ENCODE measurements at regions of chr9 and their contacts with region 1.

Region 1: DNA sequence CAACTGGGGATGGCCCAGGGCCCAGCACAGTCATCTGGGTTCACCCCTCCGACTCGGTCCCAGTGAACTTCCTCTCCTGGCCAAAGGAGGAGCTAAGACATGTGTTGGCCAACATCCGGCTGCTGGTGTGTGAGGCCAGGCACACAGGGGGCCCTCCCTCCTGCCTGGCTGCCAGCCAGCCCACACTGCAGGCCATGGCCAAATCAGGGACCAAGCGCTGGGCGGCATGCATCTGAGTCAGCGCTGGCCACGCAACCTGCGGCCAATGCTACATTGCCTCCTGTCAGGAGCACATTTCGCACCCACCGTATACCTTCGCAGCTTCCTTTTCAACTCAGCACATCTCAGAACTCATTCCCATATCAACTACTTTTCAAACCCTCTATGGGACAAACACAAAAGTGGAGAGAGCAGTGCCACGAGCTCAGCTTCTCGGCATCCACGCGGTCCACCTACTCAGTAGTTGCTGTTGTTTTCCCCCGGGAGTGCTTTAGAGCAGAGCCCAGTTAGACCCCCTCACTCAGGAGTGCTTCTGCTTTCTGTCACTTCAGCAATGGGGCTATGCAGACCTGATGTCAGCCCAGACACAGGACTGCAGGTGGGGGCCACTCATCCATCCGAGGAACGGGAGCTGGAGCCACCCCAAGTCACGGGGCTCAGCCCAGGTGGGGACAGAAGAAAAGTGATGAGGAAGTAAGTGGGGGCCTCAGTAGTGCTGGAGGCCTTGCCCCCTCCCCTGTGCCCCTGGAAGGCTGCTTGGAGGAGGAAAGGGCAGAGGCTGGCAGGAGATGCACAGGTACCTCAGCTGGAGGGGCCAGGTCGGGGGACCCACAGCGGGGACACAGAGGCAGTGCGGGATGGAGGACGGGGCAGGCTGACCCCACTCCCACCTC is 13.9 kb downstream of the NINJ1 start:
- DNase-seq: peak; percentile 91 to 96 (median 95)
- ATAC-seq: peak; percentile 88 to 95 (median 90)
- H3K4me3 ChIP-seq: no peak overlapping the region
- H3K27ac ChIP-seq: peak overlapping the region in 10 of 12 donors; percentile 26 to 90 (median 56)
- H3K4me1 ChIP-seq: peaks cover 0 to 52% (median 18%) of the 10 kb centered on the region in 12 donors
- H3K27me3 ChIP-seq: no peaks in the 10 kb centered on the region
- CTCF ChIP-seq: peak in 11 of 12 donors; percentile 10 to 58 (median 38)
- POLR2A ChIP-seq: no peak

Region 2: DNA sequence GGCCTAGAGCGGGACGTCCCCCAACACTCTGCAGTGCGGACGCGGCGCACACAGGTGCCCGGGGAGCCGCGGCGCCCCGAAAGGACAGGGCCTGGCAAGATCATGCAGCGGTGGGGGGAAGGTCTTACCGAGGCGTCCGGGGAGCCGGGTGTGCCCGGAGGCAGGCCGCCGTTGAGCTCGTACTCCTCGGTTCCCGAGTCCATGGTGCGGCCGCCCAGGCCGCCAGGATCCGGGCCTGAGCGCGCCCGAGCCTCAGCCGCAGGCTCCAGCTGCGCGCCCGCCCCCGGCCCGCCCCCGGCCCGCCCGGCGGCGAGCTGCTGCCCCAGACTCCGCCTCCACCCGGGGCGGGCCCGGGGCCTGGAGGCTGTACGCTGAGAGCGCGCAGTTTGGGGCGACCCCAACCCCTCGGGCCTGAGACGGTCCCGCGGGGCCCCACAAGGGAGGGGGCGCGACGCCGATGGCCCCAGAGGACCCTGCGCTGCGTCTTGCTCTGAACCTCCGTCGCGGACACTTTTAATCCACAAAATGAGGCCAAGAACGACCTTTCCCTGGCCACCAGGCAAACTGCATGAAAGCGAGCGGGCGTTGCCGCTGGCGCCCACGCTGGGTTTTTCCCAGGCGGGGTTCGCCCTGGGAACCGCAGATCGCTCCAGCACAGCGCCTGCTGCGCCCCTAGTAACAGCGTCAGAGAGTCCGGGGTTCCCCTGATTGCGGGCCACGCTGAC is 14.0 kb after region 1 on chr9 and contains the start of gene NINJ1:
- intact Hi-C with region 1: loop called in 1 of 10 experiments (anchors 2 kb)
- DNase-seq: peak; percentile 72 to 87 (median 80)
- ATAC-seq: peak; percentile 46 to 86 (median 77)
- H3K4me3 ChIP-seq: peak within 1 kb of the TSS; percentile 69 to 98 (median 86)
- H3K27ac ChIP-seq: peak within 1 kb of the TSS; percentile 74 to 97 (median 95)
- H3K4me1 ChIP-seq: peaks cover 4 to 63% (median 48%) of the 10 kb centered on the region in 12 donors
- H3K27me3 ChIP-seq: no peaks in the 10 kb centered on the region
- CTCF ChIP-seq: no peak
- POLR2A ChIP-seq: peak; percentile 62 to 81
- total RNA-seq, gene NINJ1: 42.2 to 96.1 (median 56.3) TPM